H1 (cell line): ENCODE measurements at regions of chr18 and their contacts with region 1.

Region 1: DNA sequence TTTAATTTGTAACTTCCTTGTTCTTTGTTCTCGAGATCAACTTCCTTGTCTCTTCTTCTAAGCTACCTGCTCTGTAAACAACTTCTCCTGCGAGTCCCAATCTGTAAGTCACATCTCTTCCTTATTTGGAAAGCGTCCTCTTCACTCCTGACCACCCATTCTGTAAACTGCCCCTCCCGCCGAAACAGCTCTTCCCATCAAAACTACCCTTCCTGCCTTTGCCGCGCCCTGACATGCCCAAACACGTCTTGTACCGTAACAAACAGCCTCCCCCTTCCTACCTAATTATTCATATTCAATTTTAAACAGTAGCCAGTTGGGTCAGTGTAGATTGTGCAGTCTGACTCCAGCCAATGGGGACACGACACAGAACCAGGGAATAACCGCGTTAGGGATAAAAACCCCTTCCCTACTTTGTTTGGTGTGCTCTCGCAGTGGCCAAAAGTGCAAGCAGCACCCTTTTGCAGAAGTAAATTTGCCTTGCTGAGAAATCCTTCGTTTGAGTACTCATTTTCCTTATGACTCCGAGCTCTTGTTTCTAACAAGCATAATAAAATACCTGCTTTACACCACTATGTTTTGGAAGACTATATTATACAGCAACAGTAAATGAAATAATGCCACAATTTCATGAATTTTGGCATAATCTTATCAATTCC is 39.8 kb downstream of the PIAS2 start:
- DNase-seq: no peak
- H3K4me3 ChIP-seq: no peak overlapping the region
- H3K27ac ChIP-seq: peak overlapping the region; percentile 73; the same call in 1 of the 2 replicates
- H3K4me1 ChIP-seq: no peaks in the 10 kb centered on the region
- H3K27me3 ChIP-seq: no peaks in the 10 kb centered on the region
- CTCF ChIP-seq: no peak
- EP300 ChIP-seq: no peak
- POLR2A ChIP-seq: 0 out of 3 replicates have a peak, but pooled peaks of 1 of the 2 experiments have one; percentile 14
- RAD21 ChIP-seq: no peak

Region 2: DNA sequence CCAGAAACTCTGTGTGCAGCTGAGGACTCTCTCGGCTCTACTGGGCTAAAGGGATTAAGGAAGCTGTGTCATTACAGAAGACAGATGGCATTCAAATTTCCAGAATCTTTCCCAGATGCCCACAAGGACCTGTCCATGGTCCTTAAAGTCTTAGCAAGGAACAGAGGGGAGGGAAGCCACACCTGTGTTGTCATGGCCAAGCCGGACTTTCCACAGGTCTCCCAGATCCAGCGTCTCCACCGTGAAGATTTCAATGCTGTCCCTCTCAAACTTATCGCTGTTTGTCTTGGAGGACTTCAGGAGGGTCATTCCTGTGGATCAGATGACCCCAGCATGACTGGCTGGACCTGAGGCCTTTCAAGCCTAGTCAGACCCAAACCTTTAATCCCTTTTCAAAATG is 334.9 kb before region 1 on chr18:
- CTCF ChIA-PET with region 1: no interaction called
- POLR2A ChIA-PET with region 1: no interaction called
- DNase-seq: no peak
- H3K4me3 ChIP-seq: no peak overlapping the region
- H3K27ac ChIP-seq: no peak overlapping the region
- H3K4me1 ChIP-seq: no peaks in the 10 kb centered on the region
- H3K27me3 ChIP-seq: no peaks in the 10 kb centered on the region
- CTCF ChIP-seq: no peak
- EP300 ChIP-seq: no peak
- POLR2A ChIP-seq: no peak
- RAD21 ChIP-seq: no peak

Region 3: GRCh38 chr18:46832849-46833248 is 44.6 kb before region 1 on chr18:
- CTCF ChIA-PET with region 1: no interaction called
- POLR2A ChIA-PET with region 1: no interaction called
- DNase-seq: no peak
- H3K4me3 ChIP-seq: no peak overlapping the region
- H3K27ac ChIP-seq: no peak overlapping the region
- H3K4me1 ChIP-seq: no peaks in the 10 kb centered on the region
- H3K27me3 ChIP-seq: no peaks in the 10 kb centered on the region
- CTCF ChIP-seq: no peak
- EP300 ChIP-seq: no peak
- POLR2A ChIP-seq: no peak
- RAD21 ChIP-seq: no peak

Region 4: GRCh38 chr18:46917108-46917802 is 39.8 kb after region 1 on chr18 and contains the starts of genes KATNAL2 and PIAS2:
- CTCF ChIA-PET with region 1: no interaction called
- POLR2A ChIA-PET with region 1: interaction called, 14 read pairs
- DNase-seq: peak; percentile 21 to 87
- H3K4me3 ChIP-seq: peak within 1 kb of the TSS; percentile 75 to 85 (median 82)
- H3K27ac ChIP-seq: peak within 1 kb of the TSS; percentile 96
- H3K4me1 ChIP-seq: peaks cover 3 to 14% (median 10%) of the 10 kb centered on the region in 4 experiments; a peak in 5 of 7 replicates
- H3K27me3 ChIP-seq: no peaks in the 10 kb centered on the region
- CTCF ChIP-seq: no peak
- EP300 ChIP-seq: 0 out of 3 replicates have a peak, but pooled peaks of 1 of the 2 experiments have one; percentile 11
- POLR2A ChIP-seq: peak; percentile 85 to 87
- RAD21 ChIP-seq: no peak; a peak in 1 of 4 replicates
- total RNA-seq, gene KATNAL2: 8.8 and 15.2 TPM in 2 replicates
- total RNA-seq, gene PIAS2: 52.9 and 53.9 TPM in 2 replicates